Ascending aorta (tissue), 2 donors: ENCODE measurements at regions of chr2 and their contacts with region 1.

Region 1: DNA sequence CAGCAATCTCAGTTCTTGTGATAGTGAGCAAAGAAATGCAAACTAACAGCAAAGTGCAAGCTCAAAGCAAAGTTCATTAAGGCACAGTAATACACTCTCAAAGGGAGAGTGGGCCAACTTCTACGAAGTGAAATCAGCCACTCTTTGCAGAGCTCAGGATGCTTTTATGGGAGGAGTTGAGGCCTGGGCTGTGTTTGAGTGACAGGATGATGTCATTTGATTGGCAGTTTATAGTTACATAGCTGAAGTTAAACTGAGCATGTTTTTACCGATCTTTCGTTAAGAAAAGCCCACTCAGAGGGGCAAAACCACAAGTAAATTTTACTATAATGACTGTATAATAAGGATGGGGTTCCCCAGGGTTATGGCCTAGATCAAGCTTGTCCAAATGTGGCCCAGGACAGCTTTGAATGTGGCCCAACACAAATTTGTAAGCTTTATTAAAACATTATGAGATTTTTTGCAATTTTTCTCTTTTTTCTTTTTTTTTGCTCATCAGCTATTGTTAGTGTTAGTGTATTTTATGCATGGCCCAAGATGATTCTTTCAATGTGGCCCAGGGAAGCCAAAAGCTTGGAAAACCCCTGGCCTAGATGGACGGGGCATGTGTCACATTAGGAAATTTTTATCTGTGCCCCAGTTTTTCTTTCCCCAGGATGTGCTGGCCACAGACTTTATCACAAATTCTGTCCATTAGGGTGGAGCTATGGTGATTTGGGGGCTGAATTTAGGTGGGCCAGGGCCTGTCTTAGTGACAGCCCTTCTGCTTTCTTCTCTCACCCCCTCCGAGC is 8.3 kb upstream of the DNAH7 start:
- DNase-seq: no peak
- H3K4me3 ChIP-seq: no peak overlapping the region
- H3K27ac ChIP-seq: peak overlapping the region; percentile 18 to 34
- H3K4me1 ChIP-seq: peaks cover 0 to 12% of the 10 kb centered on the region in 2 donors
- H3K27me3 ChIP-seq: no peaks in the 10 kb centered on the region
- CTCF ChIP-seq: no peak

Region 2: GRCh38 chr2:196131384-196131937 is 54.5 kb after region 1 on chr2:
- intact Hi-C with region 1: no loop called
- DNase-seq: no peak
- H3K4me3 ChIP-seq: no peak overlapping the region
- H3K27ac ChIP-seq: no peak overlapping the region
- H3K4me1 ChIP-seq: no peaks in the 10 kb centered on the region
- H3K27me3 ChIP-seq: no peaks in the 10 kb centered on the region
- CTCF ChIP-seq: peak in 2 of 3 experiments; percentile 21 to 41

Region 3: GRCh38 chr2:196277002-196277401 is 200.0 kb after region 1 on chr2:
- intact Hi-C with region 1: loop called (anchors 2 kb)
- DNase-seq: no peak
- H3K4me3 ChIP-seq: no peak overlapping the region
- H3K27ac ChIP-seq: no peak overlapping the region
- H3K4me1 ChIP-seq: peaks cover 0 to 19% of the 10 kb centered on the region in 2 donors
- H3K27me3 ChIP-seq: no peaks in the 10 kb centered on the region
- CTCF ChIP-seq: peak; percentile 34 to 57 (median 35)

Region 4: GRCh38 chr2:196337208-196337953 is 260.4 kb after region 1 on chr2:
- intact Hi-C with region 1: loop called (anchors 1 kb)
- DNase-seq: no peak
- H3K4me3 ChIP-seq: no peak overlapping the region
- H3K27ac ChIP-seq: no peak overlapping the region
- H3K4me1 ChIP-seq: peaks cover 0 to 3% of the 10 kb centered on the region in 2 donors
- H3K27me3 ChIP-seq: no peaks in the 10 kb centered on the region
- CTCF ChIP-seq: peak in 2 of 3 experiments; percentile 32 to 48

Region 5: GRCh38 chr2:196453613-196454047 is 376.7 kb after region 1 on chr2:
- intact Hi-C with region 1: loop called (anchors 10 kb)
- DNase-seq: no peak
- H3K4me3 ChIP-seq: no peak overlapping the region
- H3K27ac ChIP-seq: no peak overlapping the region
- H3K4me1 ChIP-seq: no peaks in the 10 kb centered on the region
- H3K27me3 ChIP-seq: no peaks in the 10 kb centered on the region
- CTCF ChIP-seq: peak in 2 of 3 experiments; percentile 35 to 63

Region 6: GRCh38 chr2:196592912-196593881 is 516.2 kb after region 1 on chr2:
- intact Hi-C with region 1: loop called (anchors 10 kb)
- DNase-seq: no peak
- H3K4me3 ChIP-seq: peak within 1 kb of the TSS; percentile 70 to 71
- H3K27ac ChIP-seq: peak within 1 kb of the TSS; percentile 84 to 88
- H3K4me1 ChIP-seq: no peaks in the 10 kb centered on the region
- H3K27me3 ChIP-seq: no peaks in the 10 kb centered on the region
- CTCF ChIP-seq: no peak